Sigmoid colon (tissue), 7 donors: ENCODE measurements at regions of chr2 and their contacts with region 1.

Region 1: GRCh38 chr2:171574149-171574795 is 52.0 kb downstream of the CYBRD1 start:
- DNase-seq: peak; percentile 88
- H3K4me3 ChIP-seq: no peak overlapping the region
- H3K27ac ChIP-seq: no peak overlapping the region
- H3K4me1 ChIP-seq: no peaks in the 10 kb centered on the region
- H3K27me3 ChIP-seq: peaks cover 0 to 30% (median 3%) of the 10 kb centered on the region in 3 donors
- CTCF ChIP-seq: peak; percentile 77 to 98 (median 90)
- EP300 ChIP-seq: no peak
- POLR2A ChIP-seq: no peak

Region 2: DNA sequence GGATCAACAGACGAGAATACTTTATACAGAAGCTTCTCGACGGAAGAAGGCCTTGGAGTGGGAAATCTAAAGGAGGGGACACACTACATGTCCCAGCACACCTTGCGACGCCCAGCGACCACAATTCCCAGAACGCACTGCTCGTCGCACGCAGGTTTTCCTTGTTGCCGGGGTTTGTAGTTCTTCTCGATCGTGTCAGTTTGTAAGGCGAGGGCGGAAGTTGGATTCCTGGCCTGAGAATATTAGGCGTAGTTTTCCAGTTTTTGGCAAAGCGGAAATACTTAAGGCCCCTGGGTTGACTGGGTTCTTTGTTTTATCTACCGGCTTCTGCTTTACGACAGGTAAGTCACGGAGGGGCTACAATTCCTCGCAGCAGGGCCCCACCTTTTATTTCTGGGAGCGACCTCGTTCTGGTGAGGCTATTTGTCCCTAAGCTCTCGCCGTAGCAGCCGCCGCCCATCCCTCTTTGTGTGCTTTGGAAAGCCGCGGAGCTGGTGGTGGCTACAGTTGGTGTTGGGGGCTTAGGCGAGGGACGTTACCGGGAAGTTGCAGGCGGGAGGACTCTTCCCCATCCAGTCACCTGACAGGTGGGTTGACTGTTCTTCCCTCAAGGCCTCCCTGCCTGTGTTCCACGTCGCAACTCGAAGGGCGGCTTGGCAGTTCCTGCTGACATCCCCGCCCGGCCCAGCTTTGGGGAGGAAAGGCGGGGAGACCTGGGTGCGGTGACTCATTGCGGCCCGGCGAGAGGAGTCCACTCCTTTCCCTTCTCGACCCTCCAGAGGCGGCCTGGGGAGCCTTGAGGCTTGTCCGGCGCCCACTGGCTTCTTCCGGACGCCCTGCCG is 113.2 kb after region 1 on chr2 and contains the start of gene DYNC1I2:
- intact Hi-C with region 1: loop called (anchors 10 kb)
- DNase-seq: peak; percentile 96
- H3K4me3 ChIP-seq: peak within 1 kb of the TSS; percentile 55 to 91 (median 75)
- H3K27ac ChIP-seq: peak within 1 kb of the TSS; percentile 81 to 88 (median 85)
- H3K4me1 ChIP-seq: peaks cover 0 to 19% (median 16%) of the 10 kb centered on the region in 4 donors
- H3K27me3 ChIP-seq: no peaks in the 10 kb centered on the region
- CTCF ChIP-seq: peak in 1 of 4 experiments; percentile 16
- EP300 ChIP-seq: no peak
- POLR2A ChIP-seq: peak in 1 of 2 donors; percentile 31
- total RNA-seq, gene DYNC1I2: 103 to 133 (median 127) TPM

Region 3: GRCh38 chr2:172113617-172114016 is 539.3 kb after region 1 on chr2:
- intact Hi-C with region 1: loop called (anchors 5 kb)
- DNase-seq: no peak
- H3K4me3 ChIP-seq: no peak overlapping the region
- H3K27ac ChIP-seq: no peak overlapping the region
- H3K4me1 ChIP-seq: no peaks in the 10 kb centered on the region
- H3K27me3 ChIP-seq: peaks cover 3 to 36% (median 11%) of the 10 kb centered on the region in 3 donors
- CTCF ChIP-seq: peak in 2 of 4 experiments; percentile 10 to 26
- EP300 ChIP-seq: no peak
- POLR2A ChIP-seq: no peak

Region 4: DNA sequence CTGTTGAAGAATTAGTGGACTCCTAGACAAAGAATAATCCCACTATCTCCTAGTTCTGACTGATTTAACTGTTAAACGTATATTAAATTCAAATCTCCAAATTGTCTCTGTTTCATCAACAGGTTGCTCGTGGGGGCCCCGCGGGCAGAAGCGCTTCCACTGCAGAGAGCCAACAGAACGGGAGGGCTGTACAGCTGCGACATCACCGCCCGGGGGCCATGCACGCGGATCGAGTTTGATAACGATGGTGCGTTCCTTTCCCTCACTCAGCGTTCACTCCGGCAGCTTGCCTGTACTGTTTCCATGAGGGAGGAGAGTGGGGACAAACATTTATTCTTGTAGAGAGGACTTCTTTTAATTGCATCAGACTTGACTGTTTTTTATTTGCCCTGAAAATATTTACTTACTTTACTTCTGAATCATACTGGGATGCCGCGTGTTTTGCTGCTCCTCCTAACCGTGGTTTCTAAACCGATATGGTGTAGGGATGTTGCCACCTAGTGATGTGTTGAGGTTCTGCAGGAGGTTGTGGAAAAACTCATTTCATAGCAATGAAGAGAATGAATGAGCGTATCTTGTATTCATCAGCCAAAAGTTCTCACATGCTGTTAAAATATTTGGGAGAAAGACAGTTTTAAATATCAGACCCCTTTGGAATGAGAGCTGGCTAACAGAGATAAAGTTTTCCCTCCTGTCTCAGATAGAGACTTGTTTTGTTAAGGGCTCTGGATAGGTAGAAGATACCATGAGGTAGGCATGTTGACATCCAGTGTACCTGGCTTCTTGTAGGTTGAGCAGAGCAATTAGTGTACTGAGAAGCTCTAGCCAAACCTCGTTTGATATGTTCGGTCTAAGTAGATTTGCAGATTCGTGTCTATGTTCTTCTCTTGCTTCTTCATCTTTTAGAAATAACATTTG is 891.4 kb after region 1 on chr2:
- intact Hi-C with region 1: loop called (anchors 5 kb)
- DNase-seq: peak; percentile 75
- H3K4me3 ChIP-seq: peak overlapping the region in 3 of 4 donors; percentile 18 to 20 (median 18)
- H3K27ac ChIP-seq: no peak overlapping the region
- H3K4me1 ChIP-seq: no peaks in the 10 kb centered on the region
- H3K27me3 ChIP-seq: peaks cover 0 to 18% (median 3%) of the 10 kb centered on the region in 3 donors
- CTCF ChIP-seq: peak; percentile 33 to 82 (median 77)
- EP300 ChIP-seq: no peak
- POLR2A ChIP-seq: no peak